ENCODE measurements at regions of chr3 and their contacts with region 1.

Region 1: GRCh38 chr3:11236595-11237461 is 35.4 kb upstream of the ATG7 start:
- DNase-seq: peak in 3 of 10 donors; percentile 19 to 36 (median 22)
- H3K4me3 ChIP-seq: no peak overlapping the region
- H3K27ac ChIP-seq: no peak overlapping the region
- H3K27me3 ChIP-seq: peaks cover 0 to 5% (median 0%) of the 10 kb centered on the region in 45 donors
- CTCF ChIP-seq: peak; percentile 42 to 81 (median 65)

Region 2: DNA sequence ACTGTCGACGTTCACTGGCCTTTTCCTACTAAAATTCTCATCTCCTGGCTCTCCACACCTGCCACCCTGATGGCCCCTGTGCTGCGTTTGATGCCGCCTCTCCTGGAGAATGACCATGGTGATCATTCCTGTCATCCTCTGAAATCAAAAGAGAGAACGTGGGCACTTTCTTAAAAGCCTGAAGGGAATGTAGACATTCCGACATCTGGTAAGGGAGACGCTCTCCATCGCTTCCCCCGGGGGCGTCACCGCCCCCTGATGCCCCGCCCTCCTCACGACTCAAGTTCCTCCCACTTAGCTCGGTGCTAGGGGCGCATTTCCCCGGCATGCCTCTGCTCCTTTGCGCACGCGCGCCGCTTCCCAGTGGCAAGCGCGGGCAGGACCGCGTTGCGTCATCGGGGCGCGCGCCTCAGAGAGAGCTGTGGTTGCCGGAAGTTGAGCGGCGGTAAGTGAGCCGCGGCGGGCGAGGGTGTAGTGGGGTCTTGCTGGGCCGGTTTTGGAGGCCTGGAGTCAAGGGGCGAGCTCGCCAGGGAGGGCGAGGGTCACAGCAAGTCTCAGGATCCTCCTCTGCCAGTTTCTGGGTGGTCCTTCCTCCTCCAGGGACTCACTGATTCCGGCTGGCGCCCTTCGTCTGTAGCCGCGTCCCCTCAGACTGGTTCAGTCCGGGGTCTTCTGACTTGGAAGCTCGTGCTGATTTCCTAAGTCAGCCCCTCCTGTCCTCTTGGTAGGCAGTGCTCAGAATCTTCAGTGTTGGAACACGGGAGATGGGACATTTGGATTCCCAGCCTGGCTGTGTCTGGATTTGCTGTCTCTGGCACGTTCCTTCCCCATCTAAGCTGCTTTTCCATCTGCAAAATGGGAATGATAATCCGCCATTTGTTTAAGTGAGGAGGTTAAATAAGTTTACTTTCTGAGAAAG is 35.4 kb after region 1 on chr3 and contains the start of gene ATG7:
- intact Hi-C with region 1: no loop called
- DNase-seq: peak; percentile 93 to 98 (median 96)
- H3K4me3 ChIP-seq: peak within 1 kb of the TSS; percentile 70 to 100 (median 90)
- H3K27ac ChIP-seq: peak within 1 kb of the TSS in 58 of 59 donors; percentile 26 to 97 (median 84)
- H3K27me3 ChIP-seq: no peaks in the 10 kb centered on the region
- CTCF ChIP-seq: peak in 48 of 56 donors; percentile 19 to 69 (median 38)
- total RNA-seq, gene ATG7: 48.9 to 92.7 (median 70.5) TPM

Region 3: GRCh38 chr3:11323813-11324212 is 87.0 kb after region 1 on chr3:
- intact Hi-C with region 1: loop called in 1 of 2 experiments (anchors 10 kb)
- DNase-seq: no peak
- H3K4me3 ChIP-seq: no peak overlapping the region
- H3K27ac ChIP-seq: peak overlapping the region in 35 of 59 donors; percentile 1 to 79 (median 37)
- H3K27me3 ChIP-seq: no peaks in the 10 kb centered on the region
- CTCF ChIP-seq: no peak